HEK293 (cell line): ENCODE measurements at regions of chr5 and their contacts with region 1.

Region 1: GRCh38 chr5:54905943-54906537 is 79.4 kb downstream of the ESM1 start:
- H3K4me3 ChIP-seq: no peak overlapping the region
- H3K27ac ChIP-seq: no peak overlapping the region
- H3K4me1 ChIP-seq: no peaks in the 10 kb centered on the region
- CTCF ChIP-seq: 0 out of 2 replicates have a peak, but pooled peaks have one; percentile 35

Region 2: DNA sequence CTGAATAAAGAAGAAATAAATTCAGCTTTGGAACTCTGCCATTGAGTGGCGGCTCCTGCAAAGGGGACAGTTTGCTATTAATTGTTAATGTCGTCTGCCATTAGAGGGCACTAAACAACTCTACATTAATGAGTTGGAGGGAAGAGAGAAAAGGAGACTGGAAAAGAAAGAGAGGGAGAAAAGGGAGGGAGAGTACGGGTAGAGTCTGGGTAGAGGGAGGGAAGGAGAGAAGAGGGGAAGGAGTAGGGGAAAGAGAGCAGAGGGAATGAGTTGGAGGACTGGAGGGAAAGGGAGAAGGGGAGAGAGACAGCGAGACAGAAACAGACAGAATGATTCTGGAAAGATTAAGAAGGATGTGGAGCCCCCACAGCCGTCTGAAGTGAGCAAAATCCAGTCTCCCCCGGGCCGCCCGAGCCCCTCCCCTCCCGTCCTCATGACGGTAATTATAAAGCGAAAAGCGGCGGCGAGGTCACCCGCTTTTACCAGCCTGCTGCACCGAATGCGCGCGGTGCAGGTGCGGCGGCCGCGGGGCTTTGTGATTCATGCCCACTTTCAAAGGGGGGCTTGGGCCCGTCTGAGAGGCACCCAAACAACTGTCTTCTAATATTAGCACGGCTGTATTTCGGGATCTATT is 1427.5 kb before region 1 on chr5:
- CTCF ChIA-PET with region 1: no interaction called
- POLR2A ChIA-PET with region 1: no interaction called
- H3K4me3 ChIP-seq: peak overlapping the region; percentile 31
- H3K27ac ChIP-seq: peak overlapping the region; percentile 24; the same call in 1 of the 2 replicates
- H3K4me1 ChIP-seq: peaks cover 2% of the 10 kb centered on the region
- CTCF ChIP-seq: peak; percentile 89

Region 3: GRCh38 chr5:54886866-54887265 is 19.2 kb before region 1 on chr5:
- CTCF ChIA-PET with region 1: interaction called, 10 read pairs
- POLR2A ChIA-PET with region 1: no interaction called
- H3K4me3 ChIP-seq: no peak overlapping the region
- H3K27ac ChIP-seq: no peak overlapping the region
- H3K4me1 ChIP-seq: no peaks in the 10 kb centered on the region
- CTCF ChIP-seq: no peak

Region 4: DNA sequence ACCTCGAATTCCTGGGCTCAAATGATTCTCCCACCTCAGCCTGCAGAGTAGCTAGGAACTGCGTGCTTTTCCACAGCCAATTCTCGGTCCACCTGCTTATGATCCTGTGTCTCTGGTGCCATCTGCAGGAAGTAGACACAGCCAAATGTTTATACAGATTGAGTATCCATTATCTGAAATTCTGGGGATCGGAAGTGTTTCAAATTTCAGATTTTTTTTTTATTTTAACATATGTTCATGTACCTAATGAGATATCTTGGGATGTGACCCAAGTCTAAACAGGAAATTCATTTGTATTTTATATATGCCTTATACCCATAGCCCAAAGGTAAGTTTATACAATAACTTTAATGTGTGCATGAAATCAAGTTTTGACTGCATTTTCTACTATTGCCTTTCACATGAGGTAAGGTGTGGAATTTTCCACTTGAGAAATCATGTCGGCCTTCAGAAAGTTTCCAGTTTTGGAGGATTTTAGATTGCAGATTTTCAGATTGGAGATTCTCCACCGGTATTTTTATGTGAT is 10.2 kb before region 1 on chr5:
- CTCF ChIA-PET with region 1: interaction called, 13 read pairs
- POLR2A ChIA-PET with region 1: no interaction called
- H3K4me3 ChIP-seq: no peak overlapping the region
- H3K27ac ChIP-seq: no peak overlapping the region
- H3K4me1 ChIP-seq: no peaks in the 10 kb centered on the region
- CTCF ChIP-seq: peak; percentile 76

Region 5: GRCh38 chr5:54959673-54960418 is 53.8 kb after region 1 on chr5:
- CTCF ChIA-PET with region 1: interaction called, 18 read pairs
- POLR2A ChIA-PET with region 1: no interaction called
- H3K4me3 ChIP-seq: no peak overlapping the region
- H3K27ac ChIP-seq: no peak overlapping the region
- H3K4me1 ChIP-seq: no peaks in the 10 kb centered on the region
- CTCF ChIP-seq: no peak

Region 6: GRCh38 chr5:54985301-54986268 is 79.5 kb after region 1 on chr5 and contains the start of gene ESM1:
- CTCF ChIA-PET with region 1: no interaction called
- POLR2A ChIA-PET with region 1: no interaction called
- H3K4me3 ChIP-seq: peak within 1 kb of the TSS; percentile 31
- H3K27ac ChIP-seq: no peak within 1 kb of the TSS; the same call in 1 of the 2 replicates
- H3K4me1 ChIP-seq: peaks cover 9% of the 10 kb centered on the region
- CTCF ChIP-seq: 0 out of 2 replicates have a peak, but pooled peaks have one; percentile 53

Region 7: GRCh38 chr5:55081541-55081940 is 175.5 kb after region 1 on chr5:
- CTCF ChIA-PET with region 1: no interaction called
- POLR2A ChIA-PET with region 1: no interaction called
- H3K4me3 ChIP-seq: no peak overlapping the region
- H3K27ac ChIP-seq: no peak overlapping the region
- H3K4me1 ChIP-seq: no peaks in the 10 kb centered on the region
- CTCF ChIP-seq: no peak

Region 8: DNA sequence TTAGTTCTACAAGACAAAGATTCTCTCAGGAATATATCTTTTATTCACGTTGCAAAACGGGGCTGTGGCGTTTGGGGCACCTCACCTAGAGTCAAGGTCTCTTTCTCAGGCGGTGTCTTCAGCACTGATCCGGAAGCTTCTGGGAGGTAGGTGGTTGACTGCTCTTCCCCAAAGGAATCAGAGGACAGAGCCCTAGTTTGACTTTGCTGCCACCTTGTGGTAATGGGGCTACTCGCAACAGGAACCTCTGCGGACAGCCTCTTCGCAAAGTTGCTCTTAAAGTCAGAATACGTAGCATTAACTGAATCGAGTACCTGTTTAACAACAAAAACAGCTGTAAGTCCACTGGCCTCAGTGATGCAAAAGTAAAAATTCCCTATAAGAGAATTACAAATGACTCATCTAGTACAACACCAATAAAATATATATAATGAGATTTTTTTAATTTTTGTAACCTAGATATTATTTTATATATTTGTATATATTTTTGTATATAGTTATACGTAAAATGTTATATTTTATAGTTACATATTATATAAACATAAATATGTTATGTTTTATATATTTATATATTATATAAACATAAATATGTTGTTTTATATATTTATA is 240.6 kb after region 1 on chr5:
- CTCF ChIA-PET with region 1: interaction called, 89 read pairs
- POLR2A ChIA-PET with region 1: no interaction called
- H3K4me3 ChIP-seq: no peak overlapping the region
- H3K27ac ChIP-seq: no peak overlapping the region
- H3K4me1 ChIP-seq: no peaks in the 10 kb centered on the region
- CTCF ChIP-seq: peak; percentile 84

Region 9: GRCh38 chr5:55159763-55160492 is 253.9 kb after region 1 on chr5 and contains the start of gene GPX8:
- CTCF ChIA-PET with region 1: interaction called, 56 read pairs
- POLR2A ChIA-PET with region 1: interaction called, 8 read pairs
- H3K4me3 ChIP-seq: peak within 1 kb of the TSS; percentile 54
- H3K27ac ChIP-seq: peak within 1 kb of the TSS; percentile 2; the same call in 1 of the 2 replicates
- H3K4me1 ChIP-seq: no peaks in the 10 kb centered on the region
- CTCF ChIP-seq: peak; percentile 62; the same call in 1 of the 2 replicates